BJ (cell line): ENCODE measurements at regions of chr1 and their contacts with region 1.

Region 1: GRCh38 chr1:162276493-162276892 is 100.2 kb downstream of the SPATA46 start:
- DNase-seq: no peak
- H3K4me3 ChIP-seq: no peak overlapping the region
- H3K27me3 ChIP-seq: peaks cover 3% of the 10 kb centered on the region
- CTCF ChIP-seq: peak; percentile 53

Region 2: GRCh38 chr1:162056043-162056442 is 220.4 kb before region 1 on chr1:
- CTCF ChIA-PET with region 1: interaction called, 61 read pairs
- POLR2A ChIA-PET with region 1: no interaction called
- DNase-seq: no peak
- H3K4me3 ChIP-seq: no peak overlapping the region
- H3K27me3 ChIP-seq: peaks cover 3% of the 10 kb centered on the region; the same call in 1 of the 2 replicates
- CTCF ChIP-seq: peak; percentile 95

Region 3: DNA sequence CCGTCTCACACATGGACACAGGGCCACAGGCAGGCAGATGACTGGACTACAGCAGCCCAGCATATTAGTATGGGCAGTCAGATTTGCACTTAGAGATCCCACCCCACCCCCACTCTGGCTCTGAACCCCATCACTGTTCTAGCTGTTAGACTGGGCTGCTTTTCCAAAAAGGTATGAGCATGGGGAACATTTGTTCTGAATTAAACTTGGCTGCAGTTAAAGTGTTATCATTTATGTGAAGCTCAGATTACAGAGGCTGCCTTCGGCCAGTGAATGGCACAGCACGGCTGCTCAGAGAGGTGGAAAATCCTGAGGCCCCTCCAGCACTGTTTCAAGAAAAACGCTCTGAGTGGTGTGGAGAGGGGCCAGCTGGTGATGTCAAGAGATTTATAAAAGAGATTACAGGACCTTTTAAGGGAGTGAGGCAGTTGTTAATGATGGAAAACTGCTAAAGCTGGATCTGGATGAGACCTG is 213.9 kb before region 1 on chr1:
- CTCF ChIA-PET with region 1: interaction called, 10 read pairs
- POLR2A ChIA-PET with region 1: no interaction called
- DNase-seq: peak; percentile 41
- H3K4me3 ChIP-seq: no peak overlapping the region
- H3K27me3 ChIP-seq: peaks cover 4% of the 10 kb centered on the region; the same call in 1 of the 2 replicates
- CTCF ChIP-seq: no peak